ENCODE measurements at regions of chr7 and their contacts with region 1.

Region 1: GRCh38 chr7:126398851-126399529 is 853.8 kb downstream of the GRM8 start:
- DNase-seq: no peak
- H3K4me3 Mint-ChIP-seq: no peak overlapping the region
- H3K27ac Mint-ChIP-seq: no peak overlapping the region
- H3K4me1 Mint-ChIP-seq: no peaks in the 10 kb centered on the region
- H3K27me3 Mint-ChIP-seq: no peaks in the 10 kb centered on the region

Region 2: DNA sequence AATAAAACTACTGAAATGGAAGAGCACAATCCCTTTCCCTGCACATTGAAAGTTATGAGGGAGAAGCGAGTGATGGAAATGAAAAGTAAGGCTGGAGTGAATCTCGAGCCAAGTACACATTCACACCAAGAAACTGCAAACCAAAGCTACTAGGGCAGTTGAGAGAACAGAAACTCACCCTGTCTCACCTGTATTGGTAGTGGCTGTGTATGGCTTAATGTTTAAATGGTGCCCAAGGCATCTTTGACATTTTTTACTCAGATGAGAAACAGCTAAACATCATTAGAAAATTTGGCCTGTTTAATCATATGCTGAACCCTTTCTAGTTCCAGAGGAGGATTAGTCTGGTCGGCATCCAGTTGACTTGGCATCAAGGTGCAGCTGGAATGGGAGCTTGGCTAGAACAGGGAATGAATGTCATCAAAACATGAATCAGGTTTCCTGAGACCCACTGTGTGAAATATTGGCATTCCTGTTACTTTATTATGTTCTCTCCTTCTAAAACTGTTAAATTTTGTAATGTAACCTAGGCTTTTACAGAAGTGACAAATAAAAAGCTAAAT is 12.9 kb after region 1 on chr7:
- intact Hi-C with region 1: loop called (anchors 1 kb)
- DNase-seq: no peak
- H3K4me3 Mint-ChIP-seq: no peak overlapping the region
- H3K27ac Mint-ChIP-seq: no peak overlapping the region
- H3K4me1 Mint-ChIP-seq: no peaks in the 10 kb centered on the region
- H3K27me3 Mint-ChIP-seq: no peaks in the 10 kb centered on the region